CD14-positive monocyte (primary cell): ENCODE measurements at regions of chr9 and their contacts with region 1.

Region 1: GRCh38 chr9:19102631-19103345 is at the start of gene HAUS6:
- DNase-seq: peak; percentile 96 to 97 (median 97)
- H3K4me3 ChIP-seq: peak within 1 kb of the TSS; percentile 72 to 92 (median 75)
- H3K4me3 Mint-ChIP-seq: peak within 1 kb of the TSS; percentile 92 to 95
- H3K27ac ChIP-seq: peak within 1 kb of the TSS; percentile 67 to 99
- H3K27ac Mint-ChIP-seq: peak within 1 kb of the TSS; percentile 92 to 96 (median 95)
- H3K4me1 ChIP-seq: peaks cover 17 to 23% of the 10 kb centered on the region in 2 donors
- H3K4me1 Mint-ChIP-seq: peaks cover 15% of the 10 kb centered on the region
- H3K27me3 ChIP-seq: no peaks in the 10 kb centered on the region
- H3K27me3 Mint-ChIP-seq: no peaks in the 10 kb centered on the region
- CTCF ChIP-seq: no peak
- polyA plus RNA-seq, gene HAUS6: 1.3 to 4.1 (median 2.3) TPM

Region 2: DNA sequence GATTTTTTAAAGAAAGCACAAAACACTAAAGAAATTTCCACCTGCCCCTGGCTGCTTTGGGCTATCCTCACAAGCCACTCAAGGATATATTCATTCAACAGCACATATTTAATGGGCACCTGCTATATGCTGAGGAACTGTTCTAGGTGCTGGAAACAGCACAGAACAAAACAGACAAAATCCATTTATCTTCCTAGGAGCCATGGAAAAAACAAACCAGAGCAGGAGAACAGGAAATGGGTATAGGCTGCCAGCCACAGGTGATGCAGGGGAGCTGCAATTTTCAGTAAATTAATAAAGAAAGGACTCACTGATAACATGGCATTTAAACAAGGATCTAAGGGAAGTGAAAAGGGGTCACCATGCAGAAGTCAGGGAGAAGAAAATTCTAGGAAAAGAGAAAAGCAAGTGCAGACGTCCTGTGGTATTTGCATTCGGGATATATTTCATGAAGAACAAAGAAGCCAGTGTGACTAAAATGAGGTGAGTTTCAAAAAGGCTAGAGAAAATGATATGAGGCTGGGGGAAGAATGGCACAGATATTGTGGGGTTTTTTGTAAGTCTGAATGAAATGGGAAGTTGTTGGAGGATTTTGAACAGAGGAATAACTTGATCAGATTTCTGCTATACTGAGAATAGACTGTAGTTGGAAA is 476.6 kb before region 1 on chr9:
- intact Hi-C with region 1: no loop called
- DNase-seq: no peak
- H3K4me3 ChIP-seq: no peak overlapping the region
- H3K4me3 Mint-ChIP-seq: no peak overlapping the region
- H3K27ac ChIP-seq: no peak overlapping the region
- H3K27ac Mint-ChIP-seq: no peak overlapping the region
- H3K4me1 ChIP-seq: no peaks in the 10 kb centered on the region
- H3K4me1 Mint-ChIP-seq: no peaks in the 10 kb centered on the region
- H3K27me3 ChIP-seq: no peaks in the 10 kb centered on the region
- H3K27me3 Mint-ChIP-seq: peaks cover 0 to 2% (median 0%) of the 10 kb centered on the region in 3 donors
- CTCF ChIP-seq: no peak

Region 3: GRCh38 chr9:19057033-19057432 is 45.8 kb before region 1 on chr9:
- intact Hi-C with region 1: no loop called
- DNase-seq: no peak
- H3K4me3 ChIP-seq: no peak overlapping the region
- H3K4me3 Mint-ChIP-seq: no peak overlapping the region
- H3K27ac ChIP-seq: no peak overlapping the region
- H3K27ac Mint-ChIP-seq: peak overlapping the region in 1 of 7 donors; percentile 65
- H3K4me1 ChIP-seq: no peaks in the 10 kb centered on the region
- H3K4me1 Mint-ChIP-seq: peaks cover 2% of the 10 kb centered on the region
- H3K27me3 ChIP-seq: no peaks in the 10 kb centered on the region
- H3K27me3 Mint-ChIP-seq: no peaks in the 10 kb centered on the region
- CTCF ChIP-seq: no peak

Region 4: GRCh38 chr9:19127881-19128500 is 25.2 kb after region 1 on chr9:
- intact Hi-C with region 1: loop called in 1 of 2 experiments (anchors 2 kb)
- DNase-seq: peak in 2 of 3 donors; percentile 21 to 34
- H3K4me3 ChIP-seq: peak overlapping the region; percentile 66 to 95 (median 77)
- H3K4me3 Mint-ChIP-seq: peak overlapping the region; percentile 89 to 93
- H3K27ac ChIP-seq: peak overlapping the region; percentile 96 to 97
- H3K27ac Mint-ChIP-seq: peak overlapping the region; percentile 91 to 96 (median 95)
- H3K4me1 ChIP-seq: peaks cover 46 to 53% of the 10 kb centered on the region in 2 donors
- H3K4me1 Mint-ChIP-seq: peaks cover 51% of the 10 kb centered on the region
- H3K27me3 ChIP-seq: no peaks in the 10 kb centered on the region
- H3K27me3 Mint-ChIP-seq: peaks cover 0 to 6% (median 2%) of the 10 kb centered on the region in 3 donors
- CTCF ChIP-seq: no peak

Region 5: GRCh38 chr9:19174127-19174912 is 71.5 kb after region 1 on chr9:
- intact Hi-C with region 1: loop called in 1 of 2 experiments (anchors 5 kb)
- DNase-seq: peak; percentile 89 to 97 (median 93)
- H3K4me3 ChIP-seq: no peak overlapping the region
- H3K4me3 Mint-ChIP-seq: peak overlapping the region in 1 of 2 donors; percentile 43
- H3K27ac ChIP-seq: peak overlapping the region; percentile 10 to 79
- H3K27ac Mint-ChIP-seq: peak overlapping the region; percentile 77 to 91 (median 85)
- H3K4me1 ChIP-seq: peaks cover 26 to 35% of the 10 kb centered on the region in 2 donors
- H3K4me1 Mint-ChIP-seq: peaks cover 33% of the 10 kb centered on the region
- H3K27me3 ChIP-seq: no peaks in the 10 kb centered on the region
- H3K27me3 Mint-ChIP-seq: peaks cover 0 to 7% (median 2%) of the 10 kb centered on the region in 3 donors
- CTCF ChIP-seq: peak; percentile 84

Region 6: GRCh38 chr9:19298436-19299000 is 195.7 kb after region 1 on chr9:
- intact Hi-C with region 1: no loop called
- DNase-seq: no peak
- H3K4me3 ChIP-seq: no peak overlapping the region
- H3K4me3 Mint-ChIP-seq: no peak overlapping the region
- H3K27ac ChIP-seq: no peak overlapping the region
- H3K27ac Mint-ChIP-seq: no peak overlapping the region
- H3K4me1 ChIP-seq: no peaks in the 10 kb centered on the region
- H3K4me1 Mint-ChIP-seq: no peaks in the 10 kb centered on the region
- H3K27me3 ChIP-seq: no peaks in the 10 kb centered on the region
- H3K27me3 Mint-ChIP-seq: no peaks in the 10 kb centered on the region
- CTCF ChIP-seq: no peak

Region 7: DNA sequence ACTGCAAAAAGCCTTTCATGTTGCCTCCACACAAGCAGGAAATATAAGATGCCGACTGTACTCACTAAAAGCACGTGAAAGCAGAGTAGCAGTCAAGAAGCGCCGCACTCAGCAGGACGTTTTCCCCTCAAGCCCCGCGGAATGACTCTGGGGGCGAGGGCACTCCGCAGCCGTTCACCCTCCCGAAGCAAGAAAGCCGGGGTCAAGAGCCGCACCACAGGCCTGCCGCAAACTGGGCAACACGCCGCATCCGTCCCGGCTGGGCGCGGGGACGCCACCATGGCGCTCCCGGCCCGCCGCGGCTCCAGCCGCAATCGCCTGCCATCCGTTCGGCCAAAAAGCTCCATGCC is 276.9 kb after region 1 on chr9:
- intact Hi-C with region 1: loop called in 1 of 2 experiments (anchors 5 kb)
- DNase-seq: peak in 1 of 3 donors; percentile 17
- H3K4me3 ChIP-seq: peak overlapping the region; percentile 53 to 94 (median 63)
- H3K4me3 Mint-ChIP-seq: peak overlapping the region; percentile 96 to 99
- H3K27ac ChIP-seq: peak overlapping the region; percentile 73 to 93
- H3K27ac Mint-ChIP-seq: peak overlapping the region; percentile 97 to 100 (median 99)
- H3K4me1 ChIP-seq: peaks cover 22 to 24% of the 10 kb centered on the region in 2 donors
- H3K4me1 Mint-ChIP-seq: peaks cover 32% of the 10 kb centered on the region
- H3K27me3 ChIP-seq: no peaks in the 10 kb centered on the region
- H3K27me3 Mint-ChIP-seq: peaks cover 0 to 4% (median 0%) of the 10 kb centered on the region in 3 donors
- CTCF ChIP-seq: no peak